ENCODE measurements at regions of chr3 and their contacts with region 1.

Region 1: GRCh38 chr3:122383771-122384697 is at the start of gene FAM162A:
- DNase-seq: peak; percentile 96
- ATAC-seq: peak; percentile 98
- H3K4me3 Mint-ChIP-seq: peak within 1 kb of the TSS; percentile 90
- H3K27ac Mint-ChIP-seq: peak within 1 kb of the TSS; percentile 91
- H3K4me1 Mint-ChIP-seq: peaks cover 58% of the 10 kb centered on the region
- H3K27me3 Mint-ChIP-seq: no peaks in the 10 kb centered on the region
- total RNA-seq, gene FAM162A: 78.0 to 78.4 TPM

Region 2: DNA sequence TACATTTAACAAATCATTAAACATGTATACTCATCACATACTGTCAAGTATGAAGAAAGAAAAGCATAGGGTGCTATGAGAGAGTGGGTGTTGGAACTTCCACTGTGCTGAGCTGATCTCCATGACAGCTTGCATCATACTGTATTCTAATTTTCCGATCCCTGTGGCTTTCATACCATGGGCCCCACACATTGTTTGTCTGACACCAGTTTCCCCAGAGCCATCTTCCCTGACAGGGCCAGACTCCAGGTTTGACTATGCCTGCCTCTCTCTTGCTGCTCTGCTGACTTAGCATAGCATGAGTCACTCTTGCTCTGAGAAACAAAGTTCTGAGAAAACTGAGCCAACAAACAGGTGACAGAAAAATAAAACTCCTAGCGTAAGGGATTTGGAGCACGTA is 237.6 kb before region 1 on chr3:
- CTCF ChIA-PET with region 1: no interaction called
- POLR2A ChIA-PET with region 1: no interaction called
- DNase-seq: peak; percentile 31
- ATAC-seq: peak; percentile 77
- H3K4me3 Mint-ChIP-seq: no peak overlapping the region
- H3K27ac Mint-ChIP-seq: peak overlapping the region; percentile 51
- H3K4me1 Mint-ChIP-seq: peaks cover 7% of the 10 kb centered on the region
- H3K27me3 Mint-ChIP-seq: no peaks in the 10 kb centered on the region

Region 3: GRCh38 chr3:122409446-122409845 is 25.4 kb after region 1 on chr3:
- CTCF ChIA-PET with region 1: interaction called, 50 read pairs
- POLR2A ChIA-PET with region 1: interaction called, 33 read pairs
- DNase-seq: no peak
- ATAC-seq: no peak
- H3K4me3 Mint-ChIP-seq: no peak overlapping the region
- H3K27ac Mint-ChIP-seq: peak overlapping the region; percentile 17
- H3K4me1 Mint-ChIP-seq: peaks cover 24% of the 10 kb centered on the region
- H3K27me3 Mint-ChIP-seq: no peaks in the 10 kb centered on the region

Region 4: GRCh38 chr3:122415720-122416654 is 32.0 kb after region 1 on chr3 and contains the start of gene WDR5B:
- CTCF ChIA-PET with region 1: interaction called, 50 read pairs
- POLR2A ChIA-PET with region 1: interaction called, 33 read pairs
- DNase-seq: peak; percentile 99
- ATAC-seq: peak; percentile 94
- H3K4me3 Mint-ChIP-seq: peak within 1 kb of the TSS; percentile 96
- H3K27ac Mint-ChIP-seq: peak within 1 kb of the TSS; percentile 99
- H3K4me1 Mint-ChIP-seq: peaks cover 51% of the 10 kb centered on the region
- H3K27me3 Mint-ChIP-seq: no peaks in the 10 kb centered on the region
- total RNA-seq, gene WDR5B: 4.5 to 5.1 TPM

Region 5: GRCh38 chr3:122475316-122475715 is 91.3 kb after region 1 on chr3:
- CTCF ChIA-PET with region 1: no interaction called
- POLR2A ChIA-PET with region 1: no interaction called
- DNase-seq: no peak
- ATAC-seq: no peak
- H3K4me3 Mint-ChIP-seq: no peak overlapping the region
- H3K27ac Mint-ChIP-seq: no peak overlapping the region
- H3K4me1 Mint-ChIP-seq: peaks cover 19% of the 10 kb centered on the region
- H3K27me3 Mint-ChIP-seq: no peaks in the 10 kb centered on the region

Region 6: GRCh38 chr3:122642935-122643334 is 258.9 kb after region 1 on chr3:
- CTCF ChIA-PET with region 1: no interaction called
- POLR2A ChIA-PET with region 1: no interaction called
- DNase-seq: no peak
- ATAC-seq: peak; percentile 85
- H3K4me3 Mint-ChIP-seq: peak overlapping the region; percentile 54
- H3K27ac Mint-ChIP-seq: peak overlapping the region; percentile 84
- H3K4me1 Mint-ChIP-seq: peaks cover 38% of the 10 kb centered on the region
- H3K27me3 Mint-ChIP-seq: peaks cover 6% of the 10 kb centered on the region

Measured in activated CD8-positive, alpha-beta T cell treated with anti-CD3 and anti-CD28 coated beads, Interleukin-2, amount 10 ng/mL, durations not matched to agents 7 days and 5 days (primary cell).